Naive thymus-derived CD4-positive, alpha-beta T cell (primary cell): ENCODE measurements at regions of chr6 and their contacts with region 1.

Region 1: GRCh38 chr6:142692942-142693341 is 252.0 kb downstream of the HIVEP2 start:
- DNase-seq: peak; percentile 39 to 73 (median 57)
- ATAC-seq: peak; percentile 89
- H3K4me3 ChIP-seq: no peak overlapping the region
- H3K4me3 Mint-ChIP-seq: peak overlapping the region in 3 of 10 donors; percentile 0 to 27 (median 16)
- H3K27ac ChIP-seq: no peak overlapping the region
- H3K27ac Mint-ChIP-seq: peak overlapping the region in 7 of 9 donors; percentile 5 to 59 (median 40)
- H3K4me1 ChIP-seq: peaks cover 0 to 7% of the 10 kb centered on the region in 2 donors
- H3K4me1 Mint-ChIP-seq: peaks cover 9 to 31% (median 22%) of the 10 kb centered on the region in 7 donors
- H3K27me3 ChIP-seq: no peaks in the 10 kb centered on the region
- H3K27me3 Mint-ChIP-seq: peaks cover 0 to 2% (median 0%) of the 10 kb centered on the region in 5 donors

Region 2: DNA sequence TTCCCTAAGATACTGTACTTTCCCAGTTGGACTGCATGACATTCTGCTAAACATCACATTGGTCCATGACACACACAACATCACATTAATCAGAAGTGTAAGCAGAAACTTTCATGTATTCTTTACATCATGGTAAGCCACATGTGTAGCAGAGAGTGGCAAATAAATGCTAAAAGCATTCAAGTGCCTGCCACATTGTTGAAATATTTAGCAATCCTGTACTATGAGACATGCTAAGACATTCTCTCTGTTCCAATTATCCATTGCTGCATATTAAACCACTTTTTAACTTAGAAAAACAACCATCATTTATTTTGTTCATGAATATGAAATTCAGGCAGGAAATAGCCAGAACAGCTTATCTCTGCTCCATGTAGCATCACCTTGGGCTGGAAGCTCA is 767.9 kb before region 1 on chr6:
- CTCF ChIA-PET with region 1: no interaction called
- POLR2A ChIA-PET with region 1: no interaction called
- intact Hi-C with region 1: no loop called
- DNase-seq: no peak
- ATAC-seq: no peak
- H3K4me3 ChIP-seq: no peak overlapping the region
- H3K4me3 Mint-ChIP-seq: no peak overlapping the region
- H3K27ac ChIP-seq: no peak overlapping the region
- H3K27ac Mint-ChIP-seq: no peak overlapping the region
- H3K4me1 ChIP-seq: no peaks in the 10 kb centered on the region
- H3K4me1 Mint-ChIP-seq: no peaks in the 10 kb centered on the region
- H3K27me3 ChIP-seq: no peaks in the 10 kb centered on the region
- H3K27me3 Mint-ChIP-seq: no peaks in the 10 kb centered on the region

Region 3: DNA sequence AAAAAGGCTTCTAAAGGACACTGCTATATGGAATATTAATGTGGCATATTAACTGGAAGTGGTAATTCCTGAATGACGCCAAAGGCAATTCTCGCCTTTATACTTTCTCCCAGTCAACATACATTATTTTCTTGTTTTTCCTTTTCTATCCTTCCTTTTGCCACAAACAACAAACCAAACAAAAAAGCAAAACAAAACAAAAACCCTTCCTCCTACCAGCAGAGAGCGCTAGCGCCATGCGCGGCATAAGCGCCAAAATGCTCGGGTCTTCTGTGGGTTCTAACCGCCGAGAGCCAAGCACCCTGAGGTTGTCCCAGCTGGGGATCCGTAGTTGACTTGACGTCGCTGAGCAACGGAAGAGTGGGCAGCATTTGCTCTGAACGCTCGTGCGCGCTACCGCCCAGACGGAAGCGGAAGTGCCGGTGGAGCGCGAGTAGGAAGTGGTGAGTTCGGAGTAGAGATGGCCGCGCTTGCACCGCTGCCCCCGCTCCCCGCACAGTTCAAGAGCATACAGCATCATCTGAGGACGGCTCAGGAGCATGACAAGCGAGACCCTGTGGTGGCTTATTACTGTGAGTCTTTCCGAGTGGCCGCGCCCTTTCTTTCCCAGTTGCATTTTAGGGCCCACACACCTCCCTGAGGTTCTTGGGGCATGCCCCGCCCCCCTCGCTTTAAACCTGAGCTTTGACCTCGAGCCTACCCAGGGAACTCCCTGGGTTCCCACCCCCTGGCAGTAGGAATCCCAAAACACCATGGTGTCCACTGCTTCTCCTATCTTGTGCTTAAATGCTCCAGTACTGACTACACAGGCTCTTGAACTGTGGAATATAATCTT is 545.9 kb before region 1 on chr6 and contains the starts of genes NMBR and VTA1:
- CTCF ChIA-PET with region 1: no interaction called
- POLR2A ChIA-PET with region 1: no interaction called
- intact Hi-C with region 1: loop called (anchors 5 to 10 kb)
- DNase-seq: peak; percentile 81 to 98 (median 97)
- ATAC-seq: peak; percentile 99
- H3K4me3 ChIP-seq: peak within 1 kb of the TSS; percentile 95
- H3K4me3 Mint-ChIP-seq: peak within 1 kb of the TSS; percentile 88 to 98 (median 95)
- H3K27ac ChIP-seq: peak within 1 kb of the TSS; percentile 75
- H3K27ac Mint-ChIP-seq: peak within 1 kb of the TSS; percentile 80 to 98 (median 94)
- H3K4me1 ChIP-seq: peaks cover 22 to 25% of the 10 kb centered on the region in 2 donors
- H3K4me1 Mint-ChIP-seq: peaks cover 36 to 73% (median 65%) of the 10 kb centered on the region in 7 donors
- H3K27me3 ChIP-seq: no peaks in the 10 kb centered on the region
- H3K27me3 Mint-ChIP-seq: peaks cover 0 to 2% (median 0%) of the 10 kb centered on the region in 5 donors
- total RNA-seq, gene NMBR: not detected
- total RNA-seq, gene VTA1: 13.6 to 41.3 (median 32.6) TPM

Region 4: GRCh38 chr6:142531727-142532126 is 161.2 kb before region 1 on chr6:
- CTCF ChIA-PET with region 1: no interaction called
- POLR2A ChIA-PET with region 1: no interaction called
- intact Hi-C with region 1: no loop called
- DNase-seq: no peak
- ATAC-seq: no peak
- H3K4me3 ChIP-seq: no peak overlapping the region
- H3K4me3 Mint-ChIP-seq: no peak overlapping the region
- H3K27ac ChIP-seq: no peak overlapping the region
- H3K27ac Mint-ChIP-seq: no peak overlapping the region
- H3K4me1 ChIP-seq: no peaks in the 10 kb centered on the region
- H3K4me1 Mint-ChIP-seq: no peaks in the 10 kb centered on the region
- H3K27me3 ChIP-seq: no peaks in the 10 kb centered on the region
- H3K27me3 Mint-ChIP-seq: no peaks in the 10 kb centered on the region

Region 5: DNA sequence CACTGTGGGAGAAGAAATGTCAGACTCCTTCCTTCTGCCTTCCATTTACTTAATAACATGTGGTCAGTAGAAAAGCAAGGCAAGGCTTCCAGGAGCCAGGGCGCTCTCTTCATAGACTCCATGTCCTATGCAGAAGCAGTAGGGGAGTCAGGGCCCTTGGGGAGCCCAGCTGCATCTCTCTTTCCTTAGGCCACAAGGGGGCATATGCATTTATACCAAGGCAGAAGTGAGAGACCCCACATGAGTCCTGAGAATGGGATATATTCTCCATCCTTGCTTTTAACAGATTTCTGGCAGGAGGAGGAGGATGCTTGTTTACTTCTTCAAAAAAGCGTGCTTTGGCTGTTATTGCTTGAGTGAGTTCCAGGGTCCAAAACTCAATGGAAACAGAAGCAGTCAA is 53.6 kb after region 1 on chr6:
- CTCF ChIA-PET with region 1: interaction called, 3 read pairs
- POLR2A ChIA-PET with region 1: no interaction called
- intact Hi-C with region 1: loop called in 1 of 2 experiments (anchors 1 kb)
- DNase-seq: peak in 7 of 9 donors; percentile 16 to 49 (median 31)
- ATAC-seq: peak; percentile 69
- H3K4me3 ChIP-seq: no peak overlapping the region
- H3K4me3 Mint-ChIP-seq: no peak overlapping the region
- H3K27ac ChIP-seq: no peak overlapping the region
- H3K27ac Mint-ChIP-seq: peak overlapping the region in 2 of 9 donors; percentile 26 to 60
- H3K4me1 ChIP-seq: no peaks in the 10 kb centered on the region
- H3K4me1 Mint-ChIP-seq: peaks cover 0 to 30% (median 17%) of the 10 kb centered on the region in 7 donors
- H3K27me3 ChIP-seq: no peaks in the 10 kb centered on the region
- H3K27me3 Mint-ChIP-seq: peaks cover 0 to 4% (median 0%) of the 10 kb centered on the region in 5 donors

Region 6: GRCh38 chr6:142958343-142958742 is 265.4 kb after region 1 on chr6:
- CTCF ChIA-PET with region 1: interaction called, 18 read pairs
- POLR2A ChIA-PET with region 1: no interaction called
- intact Hi-C with region 1: loop called in 1 of 2 experiments (anchors 1 kb)
- DNase-seq: no peak
- ATAC-seq: no peak
- H3K4me3 ChIP-seq: no peak overlapping the region
- H3K4me3 Mint-ChIP-seq: no peak overlapping the region
- H3K27ac ChIP-seq: no peak overlapping the region
- H3K27ac Mint-ChIP-seq: peak overlapping the region in 1 of 9 donors; percentile 37
- H3K4me1 ChIP-seq: no peaks in the 10 kb centered on the region
- H3K4me1 Mint-ChIP-seq: peaks cover 0 to 5% (median 2%) of the 10 kb centered on the region in 7 donors
- H3K27me3 ChIP-seq: no peaks in the 10 kb centered on the region
- H3K27me3 Mint-ChIP-seq: no peaks in the 10 kb centered on the region

Region 7: GRCh38 chr6:143038833-143039232 is 345.9 kb after region 1 on chr6:
- CTCF ChIA-PET with region 1: interaction called, 3 read pairs
- POLR2A ChIA-PET with region 1: no interaction called
- intact Hi-C with region 1: loop called in 1 of 2 experiments (anchors 1 kb)
- DNase-seq: peak in 3 of 9 donors; percentile 11 to 21 (median 12)
- ATAC-seq: no peak
- H3K4me3 ChIP-seq: no peak overlapping the region
- H3K4me3 Mint-ChIP-seq: no peak overlapping the region
- H3K27ac ChIP-seq: no peak overlapping the region
- H3K27ac Mint-ChIP-seq: no peak overlapping the region
- H3K4me1 ChIP-seq: no peaks in the 10 kb centered on the region
- H3K4me1 Mint-ChIP-seq: peaks cover 0 to 12% (median 8%) of the 10 kb centered on the region in 7 donors
- H3K27me3 ChIP-seq: peaks cover 0 to 4% of the 10 kb centered on the region in 2 donors
- H3K27me3 Mint-ChIP-seq: peaks cover 0 to 17% (median 6%) of the 10 kb centered on the region in 5 donors

Region 8: DNA sequence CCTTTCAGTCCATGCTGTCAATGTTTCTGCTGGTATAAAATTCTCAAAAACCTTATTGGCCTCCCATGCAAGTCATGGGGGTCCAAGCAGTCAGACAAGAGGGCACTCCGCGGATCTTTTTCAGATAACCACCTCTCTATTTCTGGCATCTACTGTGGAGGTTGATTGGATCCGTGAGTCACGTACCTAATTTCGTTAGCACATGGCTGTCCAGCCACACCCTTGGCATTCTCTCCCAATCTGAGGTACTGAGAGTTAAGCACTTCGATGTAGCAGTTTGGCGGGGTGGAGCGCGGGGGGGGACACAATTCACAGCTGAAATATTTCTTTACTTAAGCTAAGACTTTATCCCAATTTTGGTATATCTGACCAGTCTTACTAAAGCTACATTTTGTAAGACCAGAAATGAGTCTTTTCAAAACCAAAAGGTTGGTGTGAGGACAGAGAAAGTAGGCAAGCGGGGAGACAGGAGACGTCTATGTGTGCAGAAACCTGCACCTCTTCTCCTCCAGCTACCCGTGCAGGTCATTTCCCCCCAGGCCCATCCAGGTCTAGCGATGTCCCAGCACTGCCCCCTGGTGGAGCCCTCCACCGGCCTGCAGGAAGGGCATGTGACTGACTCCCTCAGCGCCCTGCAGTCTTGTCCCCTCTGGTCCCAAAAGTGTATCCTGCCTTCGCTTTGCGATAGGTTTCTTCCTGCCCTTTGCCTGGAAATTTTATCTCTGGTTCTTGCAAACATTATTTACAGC is 644.4 kb after region 1 on chr6:
- CTCF ChIA-PET with region 1: interaction called, 7 read pairs
- POLR2A ChIA-PET with region 1: no interaction called
- intact Hi-C with region 1: loop called (anchors 1 kb)
- DNase-seq: peak; percentile 4 to 56 (median 12)
- ATAC-seq: no peak
- H3K4me3 ChIP-seq: no peak overlapping the region
- H3K4me3 Mint-ChIP-seq: no peak overlapping the region
- H3K27ac ChIP-seq: no peak overlapping the region
- H3K27ac Mint-ChIP-seq: no peak overlapping the region
- H3K4me1 ChIP-seq: no peaks in the 10 kb centered on the region
- H3K4me1 Mint-ChIP-seq: peaks cover 0 to 2% (median 0%) of the 10 kb centered on the region in 7 donors
- H3K27me3 ChIP-seq: no peaks in the 10 kb centered on the region
- H3K27me3 Mint-ChIP-seq: no peaks in the 10 kb centered on the region

Region 9: GRCh38 chr6:143501851-143502250 is 808.9 kb after region 1 on chr6:
- CTCF ChIA-PET with region 1: no interaction called
- POLR2A ChIA-PET with region 1: no interaction called
- intact Hi-C with region 1: loop called in 1 of 2 experiments (anchors 5 kb)
- DNase-seq: no peak
- ATAC-seq: no peak
- H3K4me3 ChIP-seq: no peak overlapping the region
- H3K4me3 Mint-ChIP-seq: no peak overlapping the region
- H3K27ac ChIP-seq: no peak overlapping the region
- H3K27ac Mint-ChIP-seq: no peak overlapping the region
- H3K4me1 ChIP-seq: peaks cover 0 to 8% of the 10 kb centered on the region in 2 donors
- H3K4me1 Mint-ChIP-seq: peaks cover 17 to 25% (median 18%) of the 10 kb centered on the region in 7 donors
- H3K27me3 ChIP-seq: no peaks in the 10 kb centered on the region
- H3K27me3 Mint-ChIP-seq: no peaks in the 10 kb centered on the region